HepG2 (cell line): ENCODE measurements at regions of chr7 and their contacts with region 1.

Region 1: GRCh38 chr7:47818796-47819606 is 129.3 kb downstream of the PKD1L1 start:
- DNase-seq: peak; percentile 70
- ATAC-seq: peak; percentile 83
- H3K4me3 ChIP-seq: no peak overlapping the region
- H3K27ac ChIP-seq: no peak overlapping the region
- H3K4me1 ChIP-seq: peaks cover 20% of the 10 kb centered on the region
- H3K27me3 ChIP-seq: no peaks in the 10 kb centered on the region
- CTCF ChIP-seq: peak; percentile 91
- EP300 ChIP-seq: no peak
- POLR2A ChIP-seq: no peak
- RAD21 ChIP-seq: peak; percentile 90

Region 2: GRCh38 chr7:47444379-47445057 is 374.5 kb before region 1 on chr7:
- CTCF ChIA-PET with region 1: no interaction called
- POLR2A ChIA-PET with region 1: no interaction called
- in situ Hi-C with region 1: no loop called
- intact Hi-C with region 1: loop called (anchors 5 kb)
- DNase-seq: peak; percentile 49
- ATAC-seq: peak; percentile 46
- H3K4me3 ChIP-seq: no peak overlapping the region
- H3K27ac ChIP-seq: no peak overlapping the region
- H3K4me1 ChIP-seq: peaks cover 60% of the 10 kb centered on the region
- H3K27me3 ChIP-seq: no peaks in the 10 kb centered on the region
- CTCF ChIP-seq: peak; percentile 56
- EP300 ChIP-seq: 0 out of 4 replicates have a peak, but pooled peaks of 1 of the 2 experiments have one; percentile 12
- POLR2A ChIP-seq: no peak
- RAD21 ChIP-seq: peak; percentile 56; the same call in 1 of the 2 replicates

Region 3: GRCh38 chr7:47483604-47484273 is 335.3 kb before region 1 on chr7:
- CTCF ChIA-PET with region 1: no interaction called
- POLR2A ChIA-PET with region 1: no interaction called
- in situ Hi-C with region 1: no loop called
- intact Hi-C with region 1: loop called (anchors 1 kb)
- DNase-seq: peak; percentile 36
- ATAC-seq: peak; percentile 46
- H3K4me3 ChIP-seq: no peak overlapping the region
- H3K27ac ChIP-seq: peak overlapping the region; percentile 26
- H3K4me1 ChIP-seq: peaks cover 82% of the 10 kb centered on the region
- H3K27me3 ChIP-seq: no peaks in the 10 kb centered on the region
- CTCF ChIP-seq: peak; percentile 51
- EP300 ChIP-seq: no peak
- POLR2A ChIP-seq: no peak
- RAD21 ChIP-seq: peak; percentile 32; the same call in 1 of the 2 replicates

Region 4: DNA sequence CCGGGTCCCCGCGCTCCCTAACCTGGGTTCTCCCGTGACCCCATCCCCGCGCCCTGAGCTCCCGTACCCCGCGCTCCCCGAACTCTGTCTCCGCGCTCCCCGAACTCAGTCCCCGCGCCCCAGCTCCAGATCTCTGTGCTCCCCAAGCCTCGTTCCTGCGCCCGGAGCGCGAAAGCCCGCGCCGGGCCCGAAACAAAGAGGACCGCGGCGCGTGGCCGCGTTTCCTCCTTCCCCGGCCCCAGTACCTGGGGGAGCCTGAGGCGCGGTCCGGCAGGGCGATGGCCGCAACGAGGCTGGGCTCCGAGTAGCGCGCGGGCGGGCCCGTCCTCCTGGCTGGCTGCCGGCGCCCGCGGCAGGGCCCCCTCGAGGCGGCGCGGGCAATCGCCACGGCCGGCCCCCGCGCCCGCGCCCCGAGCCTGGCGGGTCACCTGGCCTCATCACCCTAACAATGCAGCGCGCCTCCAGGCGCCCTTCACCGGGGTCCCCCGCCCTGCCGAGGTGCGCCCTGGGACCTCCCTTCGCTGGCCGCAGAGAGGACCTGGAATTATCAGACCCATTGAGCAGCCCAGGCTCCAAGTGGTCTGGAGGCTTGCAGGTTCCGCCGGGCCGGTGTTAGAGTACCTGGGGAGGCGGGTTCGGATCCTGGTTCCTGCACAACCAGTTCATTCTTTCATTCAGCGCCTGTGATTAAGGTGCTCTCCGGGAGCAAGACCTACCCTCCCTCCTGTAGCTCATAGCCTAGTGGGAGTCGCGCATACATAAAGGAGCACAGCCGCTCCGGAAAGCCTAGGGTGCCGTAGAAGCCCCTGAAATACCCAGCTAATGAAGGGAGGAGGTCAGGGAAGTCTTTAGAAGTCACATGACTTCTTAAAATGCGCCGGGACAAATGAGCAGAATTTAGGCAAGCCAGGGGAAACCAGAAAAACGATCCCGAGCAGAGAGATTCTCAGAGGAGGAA is 236.9 kb before region 1 on chr7 and contains the start of gene TNS3:
- CTCF ChIA-PET with region 1: no interaction called
- POLR2A ChIA-PET with region 1: no interaction called
- in situ Hi-C with region 1: no loop called
- intact Hi-C with region 1: loop called (anchors 5 kb)
- DNase-seq: no peak
- ATAC-seq: peak; percentile 83
- H3K4me3 ChIP-seq: peak within 1 kb of the TSS; percentile 86 to 91 (median 89)
- H3K27ac ChIP-seq: peak within 1 kb of the TSS; percentile 82
- H3K4me1 ChIP-seq: peaks cover 56% of the 10 kb centered on the region
- H3K27me3 ChIP-seq: no peaks in the 10 kb centered on the region; a peak in 1 of 5 replicates
- CTCF ChIP-seq: peak; percentile 26; the same call in 1 of the 2 replicates
- EP300 ChIP-seq: no peak
- POLR2A ChIP-seq: peak; percentile 25 to 39; a peak in 2 of 4 replicates
- RAD21 ChIP-seq: peak; percentile 89
- total RNA-seq, gene TNS3: 51.3 and 55.7 TPM in 2 replicates

Region 5: DNA sequence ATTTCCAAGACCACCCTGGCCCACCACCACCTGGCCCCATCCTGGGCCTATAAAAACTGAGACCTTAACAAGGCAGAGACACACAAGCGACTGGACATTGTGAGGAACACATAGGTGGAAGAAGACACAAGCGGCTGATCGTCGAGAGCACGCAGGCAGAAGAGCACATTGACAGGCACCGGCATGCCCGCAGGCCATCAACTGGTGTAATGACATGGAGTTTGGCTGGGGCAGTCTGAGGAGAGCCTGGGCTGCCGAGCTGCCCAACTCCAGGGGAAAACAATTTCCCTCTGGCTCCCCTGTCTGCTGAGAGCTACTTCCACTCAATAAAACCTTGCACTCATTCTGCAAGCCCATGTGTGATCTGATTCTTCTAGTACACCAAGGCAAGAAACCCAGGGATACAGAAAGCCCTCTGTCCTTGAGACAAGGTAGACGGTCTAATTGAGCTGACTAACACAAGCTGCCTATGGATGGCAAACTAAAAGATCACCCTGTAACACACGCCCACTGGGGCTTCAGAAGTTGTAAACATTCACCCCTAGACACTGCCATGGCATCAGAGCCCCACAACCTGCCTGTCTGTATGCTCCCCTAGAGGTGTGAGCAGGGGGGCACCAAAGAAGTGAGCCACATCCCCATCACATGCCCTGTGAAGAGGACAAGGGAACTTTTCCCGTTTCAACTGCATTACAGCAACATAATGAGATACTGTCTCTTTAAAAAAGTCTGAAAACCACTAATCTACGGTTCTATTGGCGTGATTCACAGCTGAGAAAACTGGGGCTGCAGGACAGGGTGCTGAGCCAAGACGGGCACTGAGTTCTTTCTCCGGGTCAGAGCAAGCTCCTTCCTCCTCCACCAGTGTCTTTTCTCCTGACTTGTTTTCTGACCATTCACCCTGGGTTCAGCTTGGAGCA is 218.5 kb before region 1 on chr7:
- CTCF ChIA-PET with region 1: no interaction called
- POLR2A ChIA-PET with region 1: no interaction called
- in situ Hi-C with region 1: no loop called
- intact Hi-C with region 1: loop called (anchors 10 kb)
- DNase-seq: no peak
- ATAC-seq: no peak
- H3K4me3 ChIP-seq: no peak overlapping the region
- H3K27ac ChIP-seq: no peak overlapping the region
- H3K4me1 ChIP-seq: peaks cover 72% of the 10 kb centered on the region
- H3K27me3 ChIP-seq: no peaks in the 10 kb centered on the region
- CTCF ChIP-seq: no peak
- EP300 ChIP-seq: no peak
- POLR2A ChIP-seq: no peak
- RAD21 ChIP-seq: no peak

Region 6: DNA sequence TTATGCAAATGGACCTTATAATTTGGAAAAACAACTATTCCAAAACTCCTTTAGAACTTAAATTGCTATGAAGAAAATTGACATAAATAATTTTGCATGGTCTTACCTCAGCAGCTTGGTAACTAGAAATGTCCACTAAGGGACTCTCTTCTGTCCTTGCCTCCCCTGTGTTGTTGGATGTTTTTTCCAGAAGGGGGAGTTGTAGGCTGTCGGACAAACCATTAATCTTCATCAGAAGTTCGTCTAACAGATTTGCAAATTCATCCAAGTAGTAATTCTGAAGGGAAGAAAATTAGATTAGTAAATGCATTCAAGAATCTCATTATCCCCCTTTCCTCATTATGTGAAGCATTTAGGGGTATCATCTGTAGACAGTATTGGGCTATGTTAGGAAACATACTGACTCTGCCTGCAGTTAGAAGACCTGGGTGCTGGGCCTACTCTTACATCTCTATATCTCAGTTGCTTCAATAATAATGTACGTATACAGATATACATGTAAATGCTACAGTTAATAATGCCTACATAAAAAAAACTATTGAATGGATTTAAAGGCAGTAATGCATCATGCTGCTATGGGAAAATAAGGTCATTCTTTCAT is 26.4 kb before region 1 on chr7:
- CTCF ChIA-PET with region 1: interaction called, 16 read pairs
- POLR2A ChIA-PET with region 1: no interaction called
- in situ Hi-C with region 1: no loop called
- intact Hi-C with region 1: loop called (anchors 1 kb)
- DNase-seq: no peak
- ATAC-seq: peak; percentile 89
- H3K4me3 ChIP-seq: no peak overlapping the region
- H3K27ac ChIP-seq: no peak overlapping the region
- H3K4me1 ChIP-seq: peaks cover 40% of the 10 kb centered on the region
- H3K27me3 ChIP-seq: no peaks in the 10 kb centered on the region
- CTCF ChIP-seq: peak; percentile 63
- EP300 ChIP-seq: no peak
- POLR2A ChIP-seq: no peak
- RAD21 ChIP-seq: peak; percentile 60

Region 7: DNA sequence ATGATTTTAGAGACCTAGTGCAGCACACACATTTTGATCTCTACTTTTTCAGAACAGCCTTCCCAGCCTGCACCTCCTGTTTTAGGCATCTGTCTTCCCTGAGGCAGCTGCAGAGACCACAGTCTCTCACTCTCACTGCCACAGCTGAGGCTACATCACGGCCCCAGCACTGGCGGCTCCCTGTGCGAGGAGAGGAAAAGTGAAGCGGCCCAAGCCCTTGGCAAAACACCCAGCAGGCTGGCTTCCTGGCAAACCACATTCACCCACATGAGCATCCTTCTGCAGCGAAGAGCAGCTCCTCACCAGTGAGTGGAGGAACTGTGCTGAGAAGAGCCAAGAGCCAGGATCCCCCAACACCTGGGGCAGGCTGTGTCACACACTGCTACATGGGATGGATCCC is 146.5 kb after region 1 on chr7:
- CTCF ChIA-PET with region 1: no interaction called
- POLR2A ChIA-PET with region 1: no interaction called
- in situ Hi-C with region 1: no loop called
- intact Hi-C with region 1: no loop called
- DNase-seq: no peak
- ATAC-seq: no peak
- H3K4me3 ChIP-seq: no peak overlapping the region
- H3K27ac ChIP-seq: no peak overlapping the region
- H3K4me1 ChIP-seq: no peaks in the 10 kb centered on the region
- H3K27me3 ChIP-seq: no peaks in the 10 kb centered on the region
- CTCF ChIP-seq: no peak
- EP300 ChIP-seq: no peak
- POLR2A ChIP-seq: no peak
- RAD21 ChIP-seq: no peak

Region 8: DNA sequence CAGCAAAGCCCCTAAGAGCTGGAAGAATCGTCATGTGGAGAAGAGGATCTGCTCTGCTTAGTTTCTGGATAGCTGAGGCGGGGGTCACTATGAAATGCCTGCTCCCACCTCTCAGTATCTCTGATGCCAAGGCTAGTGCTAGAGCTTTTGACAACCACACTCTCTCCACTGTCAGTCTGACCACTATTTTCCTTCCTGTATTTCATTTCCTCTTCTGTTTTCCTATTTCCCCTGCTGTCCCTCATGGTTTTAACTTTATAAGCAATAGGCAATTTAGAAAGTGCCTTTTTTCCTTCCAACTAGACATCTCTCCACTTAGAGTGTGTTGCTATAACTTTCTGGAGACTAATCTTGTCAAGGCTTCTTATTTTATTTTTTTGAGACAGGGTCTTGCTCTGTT is 240.0 kb after region 1 on chr7:
- CTCF ChIA-PET with region 1: no interaction called
- POLR2A ChIA-PET with region 1: no interaction called
- in situ Hi-C with region 1: no loop called
- intact Hi-C with region 1: no loop called
- DNase-seq: no peak
- ATAC-seq: no peak
- H3K4me3 ChIP-seq: no peak overlapping the region
- H3K27ac ChIP-seq: no peak overlapping the region
- H3K4me1 ChIP-seq: no peaks in the 10 kb centered on the region
- H3K27me3 ChIP-seq: no peaks in the 10 kb centered on the region
- CTCF ChIP-seq: no peak
- EP300 ChIP-seq: no peak
- POLR2A ChIP-seq: no peak
- RAD21 ChIP-seq: no peak